ENCODE measurements at regions of chr6 and their contacts with region 1.

Region 1: GRCh38 chr6:4155848-4156466 is 20.6 kb upstream of the ECI2 start:
- DNase-seq: peak; percentile 86
- ATAC-seq: peak; percentile 99
- H3K4me3 ChIP-seq: no peak overlapping the region
- H3K27ac ChIP-seq: no peak overlapping the region
- H3K4me1 ChIP-seq: no peaks in the 10 kb centered on the region
- H3K27me3 ChIP-seq: no peaks in the 10 kb centered on the region
- CTCF ChIP-seq: peak; percentile 87
- POLR2A ChIP-seq: no peak
- RAD21 ChIP-seq: peak; percentile 89

Region 2: GRCh38 chr6:3965071-3965718 is 190.8 kb before region 1 on chr6:
- CTCF ChIA-PET with region 1: no interaction called
- POLR2A ChIA-PET with region 1: no interaction called
- dilution Hi-C with region 1: no loop called
- in situ Hi-C with region 1: no loop called
- intact Hi-C with region 1: no loop called
- DNase-seq: no peak
- ATAC-seq: no peak
- H3K4me3 ChIP-seq: no peak overlapping the region
- H3K27ac ChIP-seq: no peak overlapping the region
- H3K4me1 ChIP-seq: peaks cover 2% of the 10 kb centered on the region; the same call in 1 of the 2 replicates
- H3K27me3 ChIP-seq: no peaks in the 10 kb centered on the region; the same call in 1 of the 2 replicates
- CTCF ChIP-seq: no peak
- POLR2A ChIP-seq: no peak
- RAD21 ChIP-seq: no peak

Region 3: DNA sequence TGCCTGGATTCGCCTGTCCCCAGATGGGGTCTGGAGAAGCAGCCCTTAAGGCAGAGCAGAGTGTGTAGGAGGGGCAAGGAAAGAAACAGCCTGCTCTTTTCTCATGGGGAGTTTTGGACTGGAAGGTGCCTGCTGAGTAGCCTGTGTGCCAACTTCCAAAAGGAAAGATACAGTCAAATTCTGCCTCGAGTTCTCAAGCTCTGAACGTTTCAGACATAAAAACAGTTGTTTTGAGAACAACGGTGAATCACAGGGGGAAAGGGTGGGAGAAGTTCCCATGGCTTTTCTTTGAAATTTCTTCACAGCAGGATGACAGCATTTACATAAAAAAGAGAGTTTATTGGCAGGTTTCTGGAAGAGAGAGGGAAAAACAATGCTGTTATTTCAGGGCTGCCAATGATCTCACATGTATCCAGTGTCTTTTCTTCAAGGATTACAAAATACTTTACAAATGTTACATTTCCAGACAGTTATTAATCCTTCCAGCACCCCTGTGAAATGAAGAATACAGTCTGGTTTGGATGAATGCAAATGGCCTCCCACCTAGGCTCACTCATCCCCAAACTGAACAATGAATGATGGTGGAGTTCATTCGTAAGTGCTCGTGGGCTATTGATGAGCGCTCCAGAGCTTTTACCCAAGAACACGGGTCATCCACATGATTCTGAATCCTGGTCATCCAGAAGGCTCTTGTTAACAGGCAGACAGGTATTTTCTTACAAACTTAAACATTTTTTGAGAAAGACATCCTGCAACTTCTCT is 13.3 kb after region 1 on chr6:
- CTCF ChIA-PET with region 1: interaction called, 11 read pairs
- POLR2A ChIA-PET with region 1: no interaction called
- dilution Hi-C with region 1: no loop called
- in situ Hi-C with region 1: no loop called
- intact Hi-C with region 1: no loop called
- DNase-seq: peak; percentile 42
- ATAC-seq: peak; percentile 12; the same call in 1 of the 2 replicates
- H3K4me3 ChIP-seq: no peak overlapping the region
- H3K27ac ChIP-seq: peak overlapping the region; percentile 46; the same call in 1 of the 2 replicates
- H3K4me1 ChIP-seq: peaks cover 13% of the 10 kb centered on the region
- H3K27me3 ChIP-seq: no peaks in the 10 kb centered on the region; the same call in 1 of the 2 replicates
- CTCF ChIP-seq: no peak
- POLR2A ChIP-seq: no peak
- RAD21 ChIP-seq: no peak

Measured in IMR-90 (cell line).